ENCODE measurements at regions of chr12 and their contacts with region 1.

Region 1: DNA sequence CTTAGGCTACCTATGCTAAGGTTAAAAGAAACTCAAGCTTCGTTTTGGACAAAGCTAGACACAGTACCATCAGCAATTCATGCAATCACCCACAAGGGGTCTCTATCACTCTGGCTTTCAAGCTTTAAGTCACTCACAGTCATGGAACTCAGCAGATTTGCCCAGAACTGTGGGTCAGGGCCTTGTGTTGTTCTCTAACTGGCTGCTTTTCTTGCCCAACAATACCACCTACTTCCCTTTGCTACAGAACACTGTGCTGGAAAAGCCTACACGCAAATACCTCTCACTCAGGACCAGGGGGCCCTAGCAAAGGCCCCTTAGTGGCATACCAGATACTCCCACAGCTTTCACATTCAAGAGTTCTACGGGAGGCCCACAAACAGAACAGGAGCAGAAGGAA is 9.1 kb downstream of the NEMP1 start:
- DNase-seq: peak; percentile 16
- ATAC-seq: peak; percentile 99
- H3K4me3 Mint-ChIP-seq: peak overlapping the region; percentile 17
- H3K27ac Mint-ChIP-seq: peak overlapping the region; percentile 79
- H3K4me1 Mint-ChIP-seq: peaks cover 33% of the 10 kb centered on the region
- H3K27me3 Mint-ChIP-seq: no peaks in the 10 kb centered on the region
- CTCF ChIP-seq: peak; percentile 44

Region 2: DNA sequence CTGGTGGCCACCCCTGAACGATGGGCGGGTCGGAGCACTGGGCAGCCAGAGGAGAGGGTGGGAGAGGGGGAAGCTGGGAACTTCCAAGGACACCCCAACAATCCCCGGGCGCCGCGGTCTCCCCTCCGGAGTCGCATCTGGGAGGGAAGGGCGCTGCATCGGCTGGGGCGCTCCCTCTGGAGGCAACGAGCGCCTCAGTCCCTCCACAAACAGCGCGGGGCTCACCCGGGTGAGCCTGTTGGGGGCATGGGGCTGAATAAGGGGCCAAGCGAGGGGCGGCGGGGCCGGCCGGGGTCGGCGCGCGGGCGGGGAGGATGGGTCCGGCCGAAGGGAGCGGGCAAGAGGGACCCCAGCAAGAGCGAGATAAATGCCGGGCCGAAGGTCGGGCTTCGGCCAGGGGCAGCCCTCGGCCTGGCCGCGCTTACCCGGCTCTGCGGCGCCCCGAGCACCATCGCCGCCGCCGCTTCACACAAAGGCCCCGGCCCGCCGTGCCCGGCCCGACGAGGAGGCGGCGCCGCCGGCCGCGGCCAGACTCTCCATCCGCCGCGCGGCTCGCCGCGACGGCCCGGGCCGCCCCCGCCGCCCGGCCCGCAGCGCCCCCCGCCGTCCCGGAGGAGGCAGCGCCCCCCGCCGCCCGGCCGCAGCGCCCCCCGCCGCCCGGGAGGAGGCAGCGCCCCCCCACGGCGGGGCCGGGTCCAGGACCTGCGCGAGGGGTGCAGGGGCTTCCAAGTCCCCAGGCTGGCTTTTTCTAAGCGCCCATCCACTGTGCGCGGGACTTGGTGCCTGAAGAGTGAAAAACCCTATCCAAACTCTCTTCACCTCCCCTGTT is 63.3 kb before region 1 on chr12 and contains the start of gene ZBTB39:
- CTCF ChIA-PET with region 1: interaction called, 12 read pairs
- POLR2A ChIA-PET with region 1: no interaction called
- intact Hi-C with region 1: no loop called
- DNase-seq: peak; percentile 81
- ATAC-seq: peak; percentile 93
- H3K4me3 Mint-ChIP-seq: peak within 1 kb of the TSS; percentile 90
- H3K27ac Mint-ChIP-seq: peak within 1 kb of the TSS; percentile 82
- H3K4me1 Mint-ChIP-seq: peaks cover 35% of the 10 kb centered on the region
- H3K27me3 Mint-ChIP-seq: no peaks in the 10 kb centered on the region
- CTCF ChIP-seq: no peak
- total RNA-seq, gene ZBTB39: 12.6 and 13.3 TPM in 2 replicates

Region 3: GRCh38 chr12:57088459-57089248 is 19.1 kb after region 1 on chr12 and contains the start of gene NAB2:
- CTCF ChIA-PET with region 1: interaction called, 102 read pairs
- POLR2A ChIA-PET with region 1: interaction called, 337 read pairs
- intact Hi-C with region 1: loop called (anchors 1 kb)
- DNase-seq: peak; percentile 89
- ATAC-seq: peak; percentile 66
- H3K4me3 Mint-ChIP-seq: peak within 1 kb of the TSS; percentile 91
- H3K27ac Mint-ChIP-seq: peak within 1 kb of the TSS; percentile 96
- H3K4me1 Mint-ChIP-seq: peaks cover 55% of the 10 kb centered on the region
- H3K27me3 Mint-ChIP-seq: no peaks in the 10 kb centered on the region
- CTCF ChIP-seq: no peak
- total RNA-seq, gene NAB2: 20.4 and 22.1 TPM in 2 replicates

Region 4: DNA sequence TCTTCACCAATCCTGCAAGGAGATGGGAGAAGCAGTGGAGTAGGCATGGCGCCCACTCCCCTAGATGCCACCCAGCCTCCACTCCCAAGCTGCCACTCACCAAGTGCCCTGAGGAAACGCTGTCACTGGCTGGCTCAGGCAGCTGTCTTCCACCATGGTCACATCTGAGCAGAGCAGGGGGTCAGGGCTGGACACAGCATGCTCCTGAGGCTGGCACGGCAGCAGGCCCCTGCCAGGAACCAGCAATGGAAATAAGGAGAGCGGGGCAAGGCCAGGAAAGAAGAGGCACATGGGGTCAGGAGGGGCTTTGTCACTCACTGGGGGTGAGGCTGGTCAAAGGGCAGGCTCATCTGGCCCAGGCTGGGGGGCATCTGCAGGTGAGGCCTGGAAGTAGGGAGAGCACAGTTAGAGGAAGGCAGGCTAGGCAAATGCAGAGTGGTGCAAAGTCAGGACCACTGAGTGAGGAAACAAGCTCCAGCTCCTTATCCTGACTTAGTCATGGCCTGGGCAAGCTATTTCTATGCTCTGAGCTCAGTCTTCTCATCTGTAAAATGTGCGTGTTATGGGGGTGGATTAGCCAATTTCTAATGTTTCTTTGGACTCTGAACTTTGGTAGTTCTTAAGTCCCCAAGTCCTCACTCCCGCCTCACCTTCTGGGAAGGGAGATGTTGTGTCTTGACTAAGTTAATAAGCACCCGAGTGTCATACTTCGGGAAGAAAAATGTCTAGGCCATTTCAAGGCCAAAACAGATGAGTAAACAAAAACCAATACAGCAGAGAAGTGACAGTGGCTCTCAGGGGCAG is 27.4 kb after region 1 on chr12:
- CTCF ChIA-PET with region 1: interaction called, 102 read pairs
- POLR2A ChIA-PET with region 1: interaction called, 337 read pairs
- intact Hi-C with region 1: loop called (anchors 1 kb)
- DNase-seq: no peak
- ATAC-seq: no peak
- H3K4me3 Mint-ChIP-seq: no peak overlapping the region
- H3K27ac Mint-ChIP-seq: peak overlapping the region; percentile 63
- H3K4me1 Mint-ChIP-seq: peaks cover 54% of the 10 kb centered on the region
- H3K27me3 Mint-ChIP-seq: no peaks in the 10 kb centered on the region
- CTCF ChIP-seq: no peak

Region 5: GRCh38 chr12:57175428-57176138 is 106.1 kb after region 1 on chr12:
- CTCF ChIA-PET with region 1: interaction called, 36 read pairs
- POLR2A ChIA-PET with region 1: no interaction called
- intact Hi-C with region 1: loop called (anchors 2 kb)
- DNase-seq: no peak
- ATAC-seq: no peak
- H3K4me3 Mint-ChIP-seq: no peak overlapping the region
- H3K27ac Mint-ChIP-seq: no peak overlapping the region
- H3K4me1 Mint-ChIP-seq: no peaks in the 10 kb centered on the region
- H3K27me3 Mint-ChIP-seq: peaks cover 2% of the 10 kb centered on the region
- CTCF ChIP-seq: no peak

Region 6: DNA sequence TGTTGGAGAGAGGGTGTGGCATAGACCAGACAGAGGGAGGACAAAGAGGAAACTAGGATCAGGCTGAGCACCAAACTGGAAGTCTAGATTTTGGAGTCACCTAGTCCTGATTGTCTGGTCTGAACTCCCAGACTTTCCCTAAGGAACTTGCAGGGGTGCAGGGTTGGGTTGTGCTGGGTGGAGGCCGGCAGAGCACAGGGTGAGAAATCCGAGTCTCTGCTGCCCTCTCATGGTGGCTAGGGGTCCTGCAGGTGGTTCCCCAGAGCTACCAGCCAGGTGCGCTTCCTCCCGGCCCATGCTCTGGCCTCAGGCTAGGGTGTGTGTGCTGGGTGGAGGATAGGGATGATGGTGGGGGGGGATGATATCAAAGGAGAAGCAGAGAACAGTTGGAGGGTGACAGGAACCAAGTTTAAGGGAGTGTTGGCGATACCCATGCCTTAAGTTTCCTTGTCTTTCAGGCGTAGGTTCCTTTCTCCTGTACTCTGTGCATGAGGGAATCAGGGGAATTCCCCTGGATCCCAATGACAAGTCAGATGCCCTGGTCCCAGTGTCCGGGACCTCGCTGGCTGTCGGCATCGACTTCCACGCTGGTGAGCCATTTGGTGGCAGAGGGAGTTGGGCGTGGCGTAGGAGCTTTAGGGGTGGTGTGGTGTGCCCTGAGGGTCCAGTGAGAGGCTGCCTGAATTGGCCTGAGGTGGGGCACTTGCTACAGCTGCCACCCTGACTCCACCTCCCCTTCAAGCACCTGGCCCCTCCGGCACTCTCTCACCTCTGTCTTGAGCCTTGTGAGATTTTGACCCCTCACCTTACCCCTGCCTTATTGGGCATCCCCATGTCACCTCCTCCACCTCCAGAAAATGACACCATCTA is 113.6 kb after region 1 on chr12:
- CTCF ChIA-PET with region 1: interaction called, 26 read pairs
- POLR2A ChIA-PET with region 1: no interaction called
- intact Hi-C with region 1: loop called (anchors 1 kb)
- DNase-seq: peak; percentile 74
- ATAC-seq: peak; percentile 100
- H3K4me3 Mint-ChIP-seq: no peak overlapping the region
- H3K27ac Mint-ChIP-seq: peak overlapping the region; percentile 6
- H3K4me1 Mint-ChIP-seq: peaks cover 4% of the 10 kb centered on the region
- H3K27me3 Mint-ChIP-seq: peaks cover 1% of the 10 kb centered on the region
- CTCF ChIP-seq: no peak

Region 7: DNA sequence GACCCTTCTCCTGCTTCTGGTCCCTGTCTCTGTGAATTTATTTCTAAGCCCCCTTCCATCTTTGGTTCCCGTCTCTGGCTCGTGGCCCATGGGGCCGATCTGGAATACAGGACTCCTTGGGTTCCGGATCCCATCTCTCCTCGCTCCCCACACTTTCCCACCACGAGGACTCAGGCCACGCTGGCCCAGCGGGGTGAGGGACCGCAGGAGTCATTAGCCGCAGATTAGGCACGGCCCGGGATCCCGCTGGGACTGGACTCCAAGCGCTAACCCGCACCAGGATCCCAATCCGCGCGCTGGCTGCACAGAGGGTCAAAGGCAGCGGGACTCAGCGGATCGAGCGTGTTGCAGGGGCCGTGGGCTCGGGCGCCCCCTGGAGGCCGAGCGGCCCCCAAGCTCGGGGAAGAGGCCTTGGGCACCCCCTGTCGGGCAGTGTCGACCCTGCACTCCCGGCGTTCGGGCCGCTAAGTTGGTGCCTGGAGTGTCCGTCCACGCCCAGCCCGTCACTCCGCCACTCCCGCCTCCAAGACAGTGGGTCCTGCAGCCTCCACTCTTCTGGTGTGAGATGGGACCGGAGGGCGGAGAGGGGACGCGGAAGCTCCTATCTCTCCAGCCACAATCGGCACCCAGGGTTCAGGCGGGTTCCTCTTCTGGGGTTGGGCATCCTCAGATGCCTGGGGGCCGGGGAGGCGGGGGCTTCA is 169.5 kb after region 1 on chr12:
- CTCF ChIA-PET with region 1: interaction called, 4 read pairs
- POLR2A ChIA-PET with region 1: no interaction called
- intact Hi-C with region 1: loop called (anchors 2 kb)
- DNase-seq: peak; percentile 96
- ATAC-seq: peak; percentile 54
- H3K4me3 Mint-ChIP-seq: peak overlapping the region; percentile 89
- H3K27ac Mint-ChIP-seq: peak overlapping the region; percentile 90
- H3K4me1 Mint-ChIP-seq: peaks cover 94% of the 10 kb centered on the region
- H3K27me3 Mint-ChIP-seq: peaks cover 8% of the 10 kb centered on the region
- CTCF ChIP-seq: peak; percentile 99

Region 8: GRCh38 chr12:57276935-57277563 is 207.5 kb after region 1 on chr12:
- CTCF ChIA-PET with region 1: no interaction called
- POLR2A ChIA-PET with region 1: no interaction called
- intact Hi-C with region 1: no loop called
- DNase-seq: no peak
- ATAC-seq: no peak
- H3K4me3 Mint-ChIP-seq: no peak overlapping the region
- H3K27ac Mint-ChIP-seq: no peak overlapping the region
- H3K4me1 Mint-ChIP-seq: peaks cover 26% of the 10 kb centered on the region
- H3K27me3 Mint-ChIP-seq: no peaks in the 10 kb centered on the region
- CTCF ChIP-seq: no peak

Region 9: DNA sequence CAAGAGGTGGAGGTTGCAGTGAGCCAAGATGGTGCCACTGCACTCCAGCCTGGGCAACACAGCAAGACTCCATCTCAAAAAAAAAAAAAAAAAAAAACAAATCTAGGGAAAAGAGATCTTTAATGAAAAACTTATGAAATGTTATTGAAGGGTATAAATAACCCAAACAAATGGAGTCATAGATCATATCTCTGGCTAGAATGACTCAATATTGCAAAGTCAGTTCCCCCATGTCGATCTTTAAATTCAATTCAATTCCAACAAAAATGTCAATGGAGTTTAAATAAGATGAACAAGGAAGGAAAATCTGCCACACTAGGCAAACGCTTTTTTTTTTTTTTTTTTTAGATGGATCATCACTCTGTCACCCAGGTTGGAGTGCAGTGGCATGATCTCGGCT is 282.6 kb after region 1 on chr12:
- CTCF ChIA-PET with region 1: no interaction called
- POLR2A ChIA-PET with region 1: no interaction called
- intact Hi-C with region 1: no loop called
- DNase-seq: no peak
- ATAC-seq: no peak
- H3K4me3 Mint-ChIP-seq: no peak overlapping the region
- H3K27ac Mint-ChIP-seq: no peak overlapping the region
- H3K4me1 Mint-ChIP-seq: no peaks in the 10 kb centered on the region
- H3K27me3 Mint-ChIP-seq: no peaks in the 10 kb centered on the region
- CTCF ChIP-seq: no peak